Activated CD4-positive, alpha-beta T cell treated with anti-CD3 and anti-CD28 coated beads, Interleukin-2, amount 10 ng/mL, durations not matched to agents 24 days and 14 days (primary cell): ENCODE measurements at regions of chr12 and their contacts with region 1.

Region 1: DNA sequence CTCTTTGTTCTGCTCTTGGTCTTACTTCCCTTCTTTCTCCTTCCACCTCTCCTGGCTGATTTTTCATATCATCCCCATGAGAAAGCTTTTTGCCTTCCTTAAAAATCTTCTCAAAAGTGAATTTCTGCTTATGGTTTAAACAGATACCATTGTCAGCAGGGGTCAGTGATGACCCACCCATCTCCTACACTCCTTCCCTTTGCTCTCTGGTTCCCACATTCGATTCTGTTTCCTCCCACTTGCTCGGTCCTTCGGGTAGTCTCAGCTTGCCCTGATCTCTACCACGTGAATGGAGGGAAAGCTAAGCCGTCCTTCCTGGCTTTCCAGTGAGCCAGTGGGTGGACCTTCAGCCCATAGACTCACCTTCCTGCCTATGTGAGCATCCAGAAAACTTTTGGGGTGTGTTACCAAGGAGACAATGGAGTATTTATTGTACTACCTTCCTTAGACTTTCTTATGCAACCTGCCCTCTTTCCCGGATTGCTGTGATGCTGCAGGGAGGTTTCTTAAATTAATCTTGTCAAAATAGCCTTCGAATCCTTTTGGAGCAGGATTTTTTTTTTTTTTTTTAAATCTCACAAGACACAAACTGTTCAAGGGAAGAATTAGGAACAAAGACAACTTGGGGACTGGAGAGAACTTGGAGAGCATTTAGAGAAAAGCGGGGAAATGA is 306.3 kb downstream of the CACNA1C start:
- DNase-seq: no peak
- H3K4me3 Mint-ChIP-seq: peak overlapping the region; percentile 71
- H3K27ac Mint-ChIP-seq: peak overlapping the region; percentile 6
- H3K4me1 Mint-ChIP-seq: peaks cover 38% of the 10 kb centered on the region
- H3K27me3 Mint-ChIP-seq: peaks cover 14% of the 10 kb centered on the region

Region 2: DNA sequence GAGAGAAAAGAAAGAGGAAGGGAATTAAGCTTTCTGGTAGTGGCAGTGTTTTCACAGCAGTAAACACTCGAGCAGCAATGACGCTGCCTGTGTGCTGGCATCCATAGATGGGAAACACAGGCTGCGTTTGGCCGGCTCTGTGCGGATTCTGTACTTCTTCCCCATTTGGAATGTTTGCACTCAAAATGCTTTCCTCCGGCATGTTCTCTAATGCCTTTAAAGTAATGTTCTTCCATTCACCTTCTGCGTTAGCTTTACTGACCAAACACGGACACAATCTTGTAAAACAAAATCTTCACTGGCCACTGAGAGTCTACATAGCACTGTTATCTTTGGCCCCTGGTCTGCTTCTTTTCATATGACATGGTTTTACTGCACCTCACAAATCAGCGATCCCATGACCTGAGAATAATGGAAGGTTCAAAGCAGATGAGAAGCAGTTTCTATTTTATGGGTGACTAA is 386.2 kb before region 1 on chr12:
- intact Hi-C with region 1: no loop called
- DNase-seq: no peak
- H3K4me3 Mint-ChIP-seq: no peak overlapping the region
- H3K27ac Mint-ChIP-seq: no peak overlapping the region
- H3K4me1 Mint-ChIP-seq: no peaks in the 10 kb centered on the region
- H3K27me3 Mint-ChIP-seq: no peaks in the 10 kb centered on the region

Region 3: GRCh38 chr12:2149091-2149490 is 210.0 kb before region 1 on chr12:
- intact Hi-C with region 1: no loop called
- DNase-seq: no peak
- H3K4me3 Mint-ChIP-seq: no peak overlapping the region
- H3K27ac Mint-ChIP-seq: no peak overlapping the region
- H3K4me1 Mint-ChIP-seq: no peaks in the 10 kb centered on the region
- H3K27me3 Mint-ChIP-seq: peaks cover 15% of the 10 kb centered on the region

Region 4: GRCh38 chr12:2387103-2387834 is 28.1 kb after region 1 on chr12:
- intact Hi-C with region 1: loop called (anchors 1 kb)
- DNase-seq: peak; percentile 64
- H3K4me3 Mint-ChIP-seq: no peak overlapping the region
- H3K27ac Mint-ChIP-seq: no peak overlapping the region
- H3K4me1 Mint-ChIP-seq: no peaks in the 10 kb centered on the region
- H3K27me3 Mint-ChIP-seq: peaks cover 20% of the 10 kb centered on the region

Region 5: GRCh38 chr12:2402073-2402579 is 43.0 kb after region 1 on chr12:
- intact Hi-C with region 1: no loop called
- DNase-seq: no peak
- H3K4me3 Mint-ChIP-seq: no peak overlapping the region
- H3K27ac Mint-ChIP-seq: no peak overlapping the region
- H3K4me1 Mint-ChIP-seq: no peaks in the 10 kb centered on the region
- H3K27me3 Mint-ChIP-seq: peaks cover 14% of the 10 kb centered on the region

Region 6: DNA sequence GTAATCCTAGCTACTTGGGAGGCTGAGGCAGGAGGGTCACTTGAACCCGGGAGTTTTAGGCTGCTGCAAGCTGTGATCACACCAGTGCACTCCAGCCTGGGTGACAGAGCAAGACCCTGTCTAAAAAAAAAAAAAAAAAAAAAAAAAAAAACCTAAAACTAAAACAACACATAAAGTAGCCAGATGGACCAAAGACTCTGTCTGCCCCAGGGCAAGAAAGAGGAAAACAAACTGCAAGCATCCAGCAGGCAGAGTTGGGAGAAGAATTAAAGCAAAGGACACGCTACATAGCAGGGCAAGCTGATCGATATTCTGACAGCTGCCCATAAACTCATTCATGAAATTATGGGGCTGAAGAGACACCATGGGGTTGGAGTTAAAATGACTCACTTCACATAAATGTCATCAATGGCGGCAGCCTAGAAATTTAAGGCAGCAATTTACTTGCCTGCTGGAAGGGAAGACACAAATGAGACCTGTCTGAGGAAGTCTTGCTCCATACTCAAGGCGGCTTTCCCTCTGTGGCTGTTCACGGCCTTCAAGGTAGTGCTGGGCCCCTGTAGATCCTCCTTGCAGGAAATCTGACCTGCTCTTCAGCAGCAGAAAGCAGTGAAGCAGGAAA is 176.6 kb after region 1 on chr12:
- intact Hi-C with region 1: no loop called
- DNase-seq: no peak
- H3K4me3 Mint-ChIP-seq: no peak overlapping the region
- H3K27ac Mint-ChIP-seq: no peak overlapping the region
- H3K4me1 Mint-ChIP-seq: no peaks in the 10 kb centered on the region
- H3K27me3 Mint-ChIP-seq: no peaks in the 10 kb centered on the region

Region 7: DNA sequence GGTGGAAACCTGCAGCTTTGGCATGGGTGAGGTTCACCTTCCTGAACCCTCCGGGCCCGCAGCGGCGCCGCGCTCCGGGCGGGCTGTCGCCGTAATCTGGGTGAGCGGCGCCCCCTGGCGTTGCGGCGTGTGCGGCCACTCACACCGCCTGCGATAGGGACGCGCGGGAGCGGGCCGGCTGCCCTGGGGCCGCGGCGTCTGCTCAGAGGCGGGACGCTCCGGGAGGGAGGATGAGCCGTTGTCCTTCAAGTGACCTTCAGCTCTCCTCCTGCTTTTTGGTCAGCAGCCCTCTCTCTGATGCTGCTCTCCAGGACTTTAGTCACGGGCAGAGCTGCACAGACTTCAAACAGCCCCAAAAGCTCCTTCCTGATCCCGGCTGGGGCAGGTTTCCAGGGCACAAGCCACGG is 224.0 kb after region 1 on chr12:
- intact Hi-C with region 1: loop called (anchors 10 kb)
- DNase-seq: peak; percentile 90
- H3K4me3 Mint-ChIP-seq: no peak overlapping the region
- H3K27ac Mint-ChIP-seq: no peak overlapping the region
- H3K4me1 Mint-ChIP-seq: no peaks in the 10 kb centered on the region
- H3K27me3 Mint-ChIP-seq: peaks cover 36% of the 10 kb centered on the region